ENCODE measurements at regions of chr6 and their contacts with region 1.

Region 1: DNA sequence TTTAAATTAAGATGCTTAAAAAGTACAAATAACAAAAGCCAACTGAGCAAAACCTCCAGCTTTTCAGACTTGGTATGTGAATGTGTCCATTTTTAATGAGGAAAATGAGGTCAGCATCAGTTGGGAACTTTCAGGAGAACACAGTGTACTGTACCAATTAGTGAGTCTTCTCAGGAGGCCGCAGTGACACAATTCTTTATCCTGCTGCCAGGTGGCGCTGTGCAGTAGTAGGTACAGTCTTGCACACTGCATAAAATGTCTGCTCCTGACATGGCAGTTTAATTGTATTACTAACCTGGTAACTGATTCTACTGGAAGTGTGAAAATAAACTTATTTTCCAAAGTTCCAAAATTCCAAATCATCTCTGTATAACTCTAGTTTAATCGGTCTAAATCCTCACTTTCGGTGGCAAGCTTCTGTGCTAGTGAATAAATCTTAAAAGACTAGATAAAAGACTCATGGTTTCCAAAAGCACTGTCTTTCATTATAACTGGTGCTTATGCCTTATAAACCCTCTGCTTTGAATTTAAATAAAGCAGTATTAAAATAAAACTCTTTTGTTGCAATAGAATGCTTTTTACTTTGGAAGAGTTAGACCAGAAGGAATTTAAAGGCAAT is 214.8 kb upstream of the MMS22L start:
- DNase-seq: peak; percentile 66
- H3K4me3 ChIP-seq: no peak overlapping the region
- H3K27ac ChIP-seq: no peak overlapping the region
- H3K4me1 ChIP-seq: no peaks in the 10 kb centered on the region
- CTCF ChIP-seq: peak; percentile 95

Region 2: DNA sequence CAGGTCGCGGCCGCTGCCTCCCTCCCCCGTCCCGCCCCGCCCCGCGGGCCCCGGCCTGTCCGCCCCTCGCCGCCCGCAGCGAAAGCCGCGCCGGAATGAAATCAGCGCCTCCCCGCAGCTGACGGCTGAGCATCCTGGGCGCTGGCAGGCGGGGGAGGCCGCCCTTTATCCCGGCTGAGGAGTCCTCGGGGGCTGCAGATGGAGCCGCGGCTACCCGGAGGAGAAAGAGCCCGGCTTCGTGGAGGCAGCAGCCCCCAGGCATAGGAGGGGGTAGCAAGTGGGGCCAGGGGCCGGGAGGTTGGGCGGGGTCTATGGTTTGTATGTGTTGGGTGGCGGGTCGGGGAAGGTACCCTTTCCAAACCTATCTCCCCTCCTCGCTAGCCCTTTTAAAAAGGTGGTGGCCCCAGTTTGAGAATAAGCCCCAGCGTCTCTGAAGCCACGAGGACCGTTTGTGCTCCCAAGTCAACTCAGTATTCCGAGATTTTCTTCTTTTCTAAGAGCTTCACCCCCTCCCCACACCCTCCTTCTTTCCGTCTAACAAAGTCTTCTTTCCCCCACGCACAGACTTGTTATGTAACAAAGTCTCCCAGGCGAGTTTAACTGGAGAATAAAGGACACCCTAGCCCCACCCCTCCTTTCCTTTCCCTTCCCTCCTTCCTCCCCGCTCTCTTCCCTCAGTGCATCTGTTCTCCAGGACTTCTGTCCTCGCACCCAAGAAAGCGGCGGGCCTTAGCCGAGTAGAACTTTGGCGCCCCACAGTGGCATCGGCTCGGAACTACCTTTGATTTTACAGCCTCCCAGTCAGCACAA is 1347.6 kb after region 1 on chr6:
- CTCF ChIA-PET with region 1: no interaction called
- POLR2A ChIA-PET with region 1: no interaction called
- intact Hi-C with region 1: loop called (anchors 2 kb)
- DNase-seq: peak; percentile 68
- H3K4me3 ChIP-seq: peak overlapping the region; percentile 21
- H3K27ac ChIP-seq: no peak overlapping the region
- H3K4me1 ChIP-seq: peaks cover 6% of the 10 kb centered on the region
- CTCF ChIP-seq: peak; percentile 91

Region 3: DNA sequence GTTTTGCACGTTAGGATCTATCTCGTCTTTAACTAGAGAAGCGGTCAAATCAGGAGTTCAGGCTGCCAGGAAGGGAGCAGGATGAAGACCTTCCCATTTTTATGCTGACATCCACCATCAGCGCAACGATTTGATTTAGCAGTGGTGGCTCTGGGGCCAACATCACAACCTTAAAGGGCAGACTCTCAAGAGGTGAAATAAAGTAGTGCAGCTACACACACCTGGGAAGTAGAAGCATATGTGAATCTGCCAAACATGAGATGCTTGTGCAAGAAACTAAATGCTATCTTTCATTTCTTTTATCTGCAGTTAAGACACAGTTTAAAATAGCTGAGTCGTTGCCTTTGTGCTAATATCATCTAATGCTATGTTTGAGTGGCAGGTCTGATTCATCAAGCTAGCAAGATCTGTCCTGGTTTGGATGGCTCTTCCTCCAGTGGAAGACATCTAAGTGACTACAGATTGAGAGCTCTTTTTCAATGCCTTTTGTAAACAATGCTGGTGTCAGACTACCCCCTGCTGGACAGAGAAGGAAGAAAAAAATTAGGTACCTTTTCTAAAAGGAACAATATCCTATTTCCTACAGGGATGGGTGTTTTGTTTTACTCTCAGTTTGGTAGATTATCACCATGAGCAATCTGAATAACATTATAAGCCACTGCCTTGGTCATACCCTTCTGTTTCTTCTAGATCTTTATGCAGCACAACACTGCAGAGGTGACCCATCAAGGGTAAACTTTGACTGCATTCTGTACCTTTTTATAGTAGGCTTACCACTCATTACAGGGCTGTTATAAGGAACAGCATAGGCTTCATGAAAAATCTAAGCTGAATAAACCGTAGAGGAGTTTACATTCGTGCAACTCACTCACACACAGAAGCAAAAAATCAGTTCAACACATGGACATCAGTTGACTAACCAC is 1621.5 kb after region 1 on chr6:
- CTCF ChIA-PET with region 1: no interaction called
- POLR2A ChIA-PET with region 1: no interaction called
- intact Hi-C with region 1: loop called (anchors 5 kb)
- DNase-seq: peak; percentile 57
- H3K4me3 ChIP-seq: no peak overlapping the region
- H3K27ac ChIP-seq: no peak overlapping the region
- H3K4me1 ChIP-seq: peaks cover 3% of the 10 kb centered on the region
- CTCF ChIP-seq: peak; percentile 90

Measured in OCI-LY7 (cell line).